ENCODE measurements at regions of chr2 and their contacts with region 1.

Region 1: GRCh38 chr2:174003720-174004695 is 38.8 kb upstream of the SP3 start:
- DNase-seq: no peak
- ATAC-seq: peak; percentile 65; the same call in 1 of the 2 replicates
- H3K4me3 ChIP-seq: no peak overlapping the region
- H3K27ac ChIP-seq: no peak overlapping the region
- H3K4me1 ChIP-seq: no peaks in the 10 kb centered on the region
- H3K27me3 ChIP-seq: no peaks in the 10 kb centered on the region
- CTCF ChIP-seq: peak; percentile 38

Region 2: GRCh38 chr2:173831312-173832229 is 172.4 kb before region 1 on chr2:
- CTCF ChIA-PET with region 1: no interaction called
- POLR2A ChIA-PET with region 1: no interaction called
- in situ Hi-C with region 1: no loop called
- intact Hi-C with region 1: no loop called
- DNase-seq: no peak
- ATAC-seq: no peak
- H3K4me3 ChIP-seq: no peak overlapping the region
- H3K27ac ChIP-seq: no peak overlapping the region
- H3K4me1 ChIP-seq: no peaks in the 10 kb centered on the region
- H3K27me3 ChIP-seq: no peaks in the 10 kb centered on the region
- CTCF ChIP-seq: no peak

Region 3: GRCh38 chr2:173938700-173939384 is 65.2 kb before region 1 on chr2:
- CTCF ChIA-PET with region 1: no interaction called
- POLR2A ChIA-PET with region 1: interaction called, 25 read pairs
- in situ Hi-C with region 1: no loop called
- intact Hi-C with region 1: no loop called
- DNase-seq: no peak
- ATAC-seq: no peak
- H3K4me3 ChIP-seq: no peak overlapping the region
- H3K27ac ChIP-seq: no peak overlapping the region
- H3K4me1 ChIP-seq: peaks cover 41% of the 10 kb centered on the region
- H3K27me3 ChIP-seq: no peaks in the 10 kb centered on the region
- CTCF ChIP-seq: no peak

Region 4: DNA sequence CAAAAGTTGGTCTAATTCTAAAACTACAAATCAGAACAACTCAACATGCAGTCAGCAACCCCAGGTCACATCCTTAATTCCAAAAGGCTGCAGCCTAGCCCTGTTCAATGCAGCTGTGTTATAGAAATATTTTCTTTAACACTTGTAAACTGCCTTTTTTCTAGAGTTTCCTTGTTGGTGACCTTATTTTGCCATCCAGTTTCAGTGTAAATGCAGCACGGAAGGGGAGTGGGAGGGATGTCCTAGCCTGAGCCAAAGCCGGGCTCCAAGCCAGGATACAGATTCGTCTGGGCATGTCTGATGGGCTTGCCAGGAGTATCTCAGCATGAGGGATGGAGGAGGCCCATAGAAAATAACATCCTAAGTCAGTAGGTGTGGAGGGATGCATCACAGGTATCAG is 21.1 kb before region 1 on chr2:
- CTCF ChIA-PET with region 1: no interaction called
- POLR2A ChIA-PET with region 1: no interaction called
- in situ Hi-C with region 1: no loop called
- intact Hi-C with region 1: no loop called
- DNase-seq: no peak
- ATAC-seq: no peak
- H3K4me3 ChIP-seq: no peak overlapping the region
- H3K27ac ChIP-seq: no peak overlapping the region
- H3K4me1 ChIP-seq: no peaks in the 10 kb centered on the region
- H3K27me3 ChIP-seq: no peaks in the 10 kb centered on the region
- CTCF ChIP-seq: no peak

Region 5: DNA sequence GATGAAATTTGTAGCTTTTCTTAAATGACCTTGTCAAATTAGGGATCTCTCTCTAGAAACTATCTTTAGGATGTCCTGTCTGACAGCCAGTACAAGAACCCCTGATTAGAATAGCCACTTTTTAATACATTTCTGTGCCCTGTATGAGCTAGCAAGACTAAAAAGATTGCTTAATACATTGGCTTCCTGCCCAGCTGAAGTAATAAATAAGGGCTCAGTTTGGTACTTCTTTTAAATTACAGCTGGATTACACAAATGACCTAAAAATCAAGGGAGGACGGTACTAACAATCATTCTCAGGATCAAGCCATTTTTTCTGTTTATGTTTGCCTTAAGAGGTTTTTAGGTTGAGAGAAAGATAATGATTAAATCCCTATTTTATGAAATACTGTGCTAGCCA is 256.0 kb after region 1 on chr2:
- CTCF ChIA-PET with region 1: no interaction called
- POLR2A ChIA-PET with region 1: no interaction called
- in situ Hi-C with region 1: no loop called
- intact Hi-C with region 1: no loop called
- DNase-seq: no peak
- ATAC-seq: no peak
- H3K4me3 ChIP-seq: no peak overlapping the region
- H3K27ac ChIP-seq: no peak overlapping the region
- H3K4me1 ChIP-seq: 0 out of 2 replicates have a peak, but pooled peaks cover 3% of the 10 kb centered on the region
- H3K27me3 ChIP-seq: no peaks in the 10 kb centered on the region
- CTCF ChIP-seq: no peak

Measured in Panc1 (cell line).